A673 (cell line): ENCODE measurements at regions of chr9 and their contacts with region 1.

Region 1: DNA sequence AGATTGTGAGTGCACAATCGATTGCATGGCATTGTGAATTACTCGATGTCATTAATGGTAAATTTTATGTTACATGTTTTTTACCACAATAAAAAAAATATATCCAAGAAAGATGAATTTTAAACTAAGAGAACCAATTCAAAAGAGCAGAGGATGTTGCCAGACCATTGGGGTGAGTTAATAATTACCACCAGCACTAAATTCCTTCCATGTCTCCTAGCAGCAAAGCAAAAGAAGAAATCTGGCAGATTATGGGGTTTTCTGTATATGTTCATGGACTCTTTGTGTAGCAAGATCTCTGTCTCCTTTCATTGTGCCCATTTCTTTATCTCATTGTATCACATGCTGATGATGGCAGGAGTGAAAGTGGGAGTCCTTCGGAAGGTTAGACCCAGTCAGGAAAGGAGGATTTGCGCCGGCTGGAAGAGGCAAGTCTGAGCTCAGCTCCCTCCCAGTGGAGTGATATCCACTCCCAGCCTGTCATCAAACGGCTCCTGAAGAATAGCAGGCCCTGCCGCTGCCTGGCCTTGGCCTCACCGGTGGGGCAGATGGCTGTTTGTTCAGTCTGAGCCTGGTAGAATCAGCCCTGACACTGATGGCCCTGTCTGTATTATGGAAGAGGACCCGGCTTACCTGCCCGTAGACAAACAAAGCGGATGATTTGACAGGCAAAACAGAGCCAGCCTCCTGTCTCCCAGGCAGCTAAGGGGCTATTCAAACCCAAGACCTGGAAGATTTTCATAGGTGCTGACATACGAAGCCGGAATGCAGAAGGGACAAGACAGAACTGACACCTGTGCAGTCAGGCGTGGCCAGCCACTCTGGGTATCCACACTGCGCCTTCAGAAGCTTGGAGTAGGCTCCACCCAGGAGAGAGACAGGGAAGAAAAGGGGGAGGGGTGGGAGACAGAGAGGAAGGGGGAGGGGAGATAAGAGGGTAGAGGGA is 21.9 kb upstream of the FOXE1 start:
- DNase-seq: no peak
- H3K4me3 ChIP-seq: no peak overlapping the region
- H3K27ac ChIP-seq: no peak overlapping the region
- H3K4me1 ChIP-seq: no peaks in the 10 kb centered on the region
- H3K27me3 ChIP-seq: peaks cover 52% of the 10 kb centered on the region
- CTCF ChIP-seq: no peak

Region 2: DNA sequence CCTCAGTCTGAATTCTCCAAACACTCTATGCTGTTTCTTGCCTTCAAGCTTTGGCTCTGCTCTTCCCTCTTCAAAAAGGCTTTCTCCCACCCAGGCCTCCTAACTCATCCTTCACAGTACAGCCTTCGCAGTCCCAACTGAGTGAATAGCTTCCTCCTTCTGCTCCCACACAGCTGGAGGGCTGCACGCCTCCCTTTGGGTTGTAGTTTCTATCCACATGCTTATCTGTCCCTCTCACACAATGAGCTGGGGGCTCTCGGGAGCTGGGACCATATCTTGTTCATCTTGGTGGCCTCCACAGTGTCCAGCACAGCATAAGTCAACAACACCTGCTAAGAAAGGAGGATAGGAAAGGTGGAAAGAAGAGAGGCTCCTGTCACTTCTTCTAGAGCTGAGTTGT is 64.5 kb before region 1 on chr9:
- CTCF ChIA-PET with region 1: no interaction called
- POLR2A ChIA-PET with region 1: interaction called, 23 read pairs
- intact Hi-C with region 1: no loop called
- DNase-seq: no peak
- H3K4me3 ChIP-seq: no peak overlapping the region
- H3K27ac ChIP-seq: no peak overlapping the region
- H3K4me1 ChIP-seq: no peaks in the 10 kb centered on the region
- H3K27me3 ChIP-seq: peaks cover 21% of the 10 kb centered on the region
- CTCF ChIP-seq: no peak

Region 3: GRCh38 chr9:97880336-97880735 is 49.2 kb after region 1 on chr9:
- CTCF ChIA-PET with region 1: no interaction called
- POLR2A ChIA-PET with region 1: no interaction called
- intact Hi-C with region 1: no loop called
- DNase-seq: no peak
- H3K4me3 ChIP-seq: no peak overlapping the region
- H3K27ac ChIP-seq: no peak overlapping the region
- H3K4me1 ChIP-seq: no peaks in the 10 kb centered on the region
- H3K27me3 ChIP-seq: peaks cover 17% of the 10 kb centered on the region
- CTCF ChIP-seq: no peak